Activated T-helper 1 cell treated with anti-CD3 and anti-CD28 coated beads, Interleukin-12 subunit alpha, Interleukin-12 subunit beta, Interleukin-2, Interleukin-4 antibody, amounts not matched to agents 30 ng/mL and 10 ng/mL and 1 ng/mL, durations not matched to agents 14 hours and 24 hours and 36 hours (primary cell): ENCODE measurements at regions of chr1 and their contacts with region 1.

Region 1: DNA sequence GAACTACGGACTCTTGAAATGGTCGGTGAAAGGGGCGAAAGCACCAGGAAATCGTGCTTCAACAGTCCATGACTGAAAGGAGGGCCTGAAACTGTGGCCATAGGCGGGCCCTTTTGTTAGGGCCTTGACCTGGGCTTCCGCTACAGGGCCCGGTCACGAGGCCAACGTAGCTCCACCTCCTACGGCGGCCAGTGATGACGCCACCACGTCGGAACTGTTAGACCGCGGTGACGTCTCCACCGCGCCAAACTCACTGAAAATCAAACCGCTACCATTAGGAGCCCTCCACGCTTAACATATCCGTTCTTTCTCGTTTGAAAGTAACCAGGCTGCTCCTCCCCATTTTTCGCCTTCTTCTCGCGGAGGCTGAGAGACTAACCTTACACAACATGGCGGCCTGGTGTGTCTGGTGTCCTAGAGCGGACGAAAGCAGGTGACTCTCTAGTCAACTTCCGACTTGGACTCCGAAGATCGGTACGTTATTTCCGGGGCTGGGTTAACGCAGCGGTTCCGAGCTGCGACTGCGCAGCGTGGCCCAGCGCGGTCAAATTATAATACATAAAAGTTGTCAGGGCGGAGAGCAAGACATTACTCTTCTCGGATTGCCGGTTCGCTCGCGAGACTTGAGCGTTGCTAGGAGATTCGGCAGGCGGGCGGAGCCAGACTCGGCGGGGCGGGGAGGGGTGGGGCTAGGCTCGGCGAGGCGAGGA is 376 bp upstream of the CACYBP start:
- DNase-seq: peak; percentile 96
- H3K4me3 Mint-ChIP-seq: no peak overlapping the region
- H3K27ac Mint-ChIP-seq: no peak overlapping the region
- H3K4me1 Mint-ChIP-seq: peaks cover 29% of the 10 kb centered on the region
- H3K27me3 Mint-ChIP-seq: no peaks in the 10 kb centered on the region

Region 2: GRCh38 chr1:173476664-173477285 is 1522.6 kb before region 1 on chr1:
- intact Hi-C with region 1: loop called (anchors 2 kb)
- DNase-seq: peak; percentile 74
- H3K4me3 Mint-ChIP-seq: peak overlapping the region; percentile 92
- H3K27ac Mint-ChIP-seq: peak overlapping the region; percentile 93
- H3K4me1 Mint-ChIP-seq: peaks cover 65% of the 10 kb centered on the region
- H3K27me3 Mint-ChIP-seq: no peaks in the 10 kb centered on the region

Region 3: GRCh38 chr1:174022080-174022975 is 977.0 kb before region 1 on chr1 and contains the start of gene RC3H1:
- intact Hi-C with region 1: loop called (anchors 1 kb)
- DNase-seq: peak; percentile 84
- H3K4me3 Mint-ChIP-seq: peak within 1 kb of the TSS; percentile 99
- H3K27ac Mint-ChIP-seq: peak within 1 kb of the TSS; percentile 96
- H3K4me1 Mint-ChIP-seq: peaks cover 42% of the 10 kb centered on the region
- H3K27me3 Mint-ChIP-seq: peaks cover 2% of the 10 kb centered on the region
- total RNA-seq, gene RC3H1: 47.1 and 49.5 TPM in 2 replicates

Region 4: GRCh38 chr1:174769961-174770549 is 229.3 kb before region 1 on chr1:
- intact Hi-C with region 1: loop called (anchors 1 kb)
- DNase-seq: no peak
- H3K4me3 Mint-ChIP-seq: no peak overlapping the region
- H3K27ac Mint-ChIP-seq: no peak overlapping the region
- H3K4me1 Mint-ChIP-seq: peaks cover 13% of the 10 kb centered on the region
- H3K27me3 Mint-ChIP-seq: no peaks in the 10 kb centered on the region

Region 5: DNA sequence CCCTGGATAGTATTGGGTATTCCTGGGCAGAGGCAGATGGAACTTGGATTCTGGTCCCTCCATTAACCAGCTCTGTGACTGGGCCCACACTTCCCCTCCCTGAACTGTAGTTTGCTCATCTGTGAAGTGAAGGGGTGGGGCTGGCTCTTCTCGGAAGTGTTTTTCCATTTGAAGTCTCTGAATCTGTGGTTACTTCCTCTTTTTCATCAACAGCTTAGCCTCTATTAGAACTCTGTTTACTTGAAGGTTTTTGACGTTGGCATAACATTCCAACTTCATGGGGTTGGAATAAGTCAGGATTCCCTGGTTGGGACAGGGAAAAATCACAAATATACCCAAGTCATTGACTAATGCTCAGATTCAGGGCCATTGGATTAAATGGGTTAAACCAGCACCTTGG is 189.6 kb after region 1 on chr1:
- intact Hi-C with region 1: loop called (anchors 1 kb)
- DNase-seq: peak; percentile 60
- H3K4me3 Mint-ChIP-seq: peak overlapping the region; percentile 99
- H3K27ac Mint-ChIP-seq: peak overlapping the region; percentile 84
- H3K4me1 Mint-ChIP-seq: peaks cover 75% of the 10 kb centered on the region
- H3K27me3 Mint-ChIP-seq: no peaks in the 10 kb centered on the region